Breast epithelium (tissue), 4 donors: ENCODE measurements at regions of chr6 and their contacts with region 1.

Region 1: GRCh38 chr6:158987657-158988056 is 12.3 kb downstream of the RSPH3 start:
- DNase-seq: no peak
- H3K4me3 ChIP-seq: no peak overlapping the region
- H3K27ac ChIP-seq: no peak overlapping the region
- H3K4me1 ChIP-seq: no peaks in the 10 kb centered on the region
- H3K27me3 ChIP-seq: no peaks in the 10 kb centered on the region
- CTCF ChIP-seq: no peak
- POLR2A ChIP-seq: no peak

Region 2: DNA sequence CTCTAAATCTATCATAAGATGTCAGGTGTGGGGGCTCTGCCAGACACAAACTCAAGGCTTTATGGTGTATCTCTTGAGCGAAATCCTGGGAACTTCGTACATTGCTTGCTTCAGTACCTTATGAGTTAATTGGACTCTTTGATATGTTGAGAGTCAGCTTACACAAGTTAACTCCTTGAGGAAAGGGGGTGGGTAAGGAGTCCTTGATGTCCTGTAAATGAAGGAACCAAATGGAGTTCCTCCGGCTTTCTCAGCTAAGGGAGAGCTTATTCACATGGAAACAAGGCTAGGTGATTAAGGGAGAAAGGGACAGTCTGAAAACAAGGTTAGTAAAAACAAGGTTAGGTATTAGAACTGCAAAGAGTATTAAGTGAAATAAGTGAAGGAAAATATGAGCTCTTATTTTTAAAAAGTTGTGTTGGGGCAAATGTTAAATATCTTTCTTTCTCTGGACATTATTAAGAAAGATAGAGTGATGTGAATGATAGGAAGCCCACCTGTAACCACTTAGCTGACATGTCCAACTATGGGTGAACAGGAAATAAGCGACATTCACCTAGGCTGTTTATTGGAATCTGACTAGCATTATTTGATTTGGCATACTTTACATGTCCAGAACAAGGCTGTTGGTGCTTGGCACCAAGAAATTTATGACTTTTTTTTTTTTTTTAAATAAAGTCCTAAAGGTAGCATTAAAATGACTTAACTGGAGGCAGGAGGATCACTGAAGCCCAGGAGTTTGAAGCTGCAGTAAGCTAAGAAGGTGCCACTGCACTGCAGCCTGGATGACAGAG is 793.0 kb before region 1 on chr6:
- intact Hi-C with region 1: loop called (anchors 10 kb)
- DNase-seq: no peak
- H3K4me3 ChIP-seq: no peak overlapping the region
- H3K27ac ChIP-seq: no peak overlapping the region
- H3K4me1 ChIP-seq: no peaks in the 10 kb centered on the region
- H3K27me3 ChIP-seq: no peaks in the 10 kb centered on the region
- CTCF ChIP-seq: no peak
- POLR2A ChIP-seq: no peak

Region 3: DNA sequence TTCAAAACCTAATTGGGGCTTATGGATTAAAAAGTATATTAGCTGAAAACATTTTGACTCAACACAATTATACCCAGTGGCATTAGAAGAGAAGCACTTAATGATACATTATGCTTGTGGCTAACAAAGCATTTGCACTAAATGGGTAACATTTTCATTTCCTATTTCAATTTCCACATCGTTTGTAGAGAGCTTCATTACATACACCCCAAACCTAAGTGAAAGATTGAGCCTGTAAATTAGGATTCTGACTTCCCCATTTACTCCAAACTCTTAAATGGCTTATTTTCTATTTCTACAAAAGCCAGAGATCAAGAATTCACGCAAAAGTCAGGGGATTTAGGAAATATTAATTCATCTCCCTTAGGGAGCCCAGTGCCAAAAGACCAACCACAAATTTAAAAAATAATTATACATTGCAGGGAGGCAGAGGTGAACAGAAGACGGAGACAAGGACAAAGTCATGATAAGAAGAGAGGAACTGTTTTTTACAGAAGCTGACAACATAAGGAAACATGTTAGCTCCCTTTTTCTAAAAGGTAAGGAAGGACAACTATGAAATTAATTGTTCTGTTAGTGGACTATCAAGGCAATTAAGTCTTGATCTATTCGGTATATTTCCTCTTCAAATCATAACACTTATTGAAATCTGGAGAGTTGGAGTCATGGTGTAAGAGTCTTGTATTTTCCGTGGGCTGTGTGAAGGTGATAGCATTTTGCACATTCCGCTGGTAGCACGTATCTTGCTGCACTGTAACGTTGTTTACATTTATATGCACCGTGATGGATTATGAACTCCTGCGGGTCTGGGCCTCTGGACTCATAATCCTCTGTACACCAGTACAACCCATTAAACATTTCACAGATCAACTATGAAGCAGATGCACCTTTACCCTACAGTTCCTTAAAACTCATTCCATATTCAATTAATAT is 143.6 kb before region 1 on chr6:
- intact Hi-C with region 1: no loop called
- DNase-seq: no peak
- H3K4me3 ChIP-seq: no peak overlapping the region
- H3K27ac ChIP-seq: no peak overlapping the region
- H3K4me1 ChIP-seq: no peaks in the 10 kb centered on the region
- H3K27me3 ChIP-seq: no peaks in the 10 kb centered on the region
- CTCF ChIP-seq: no peak
- POLR2A ChIP-seq: no peak